Activated naive CD8-positive, alpha-beta T cell treated with anti-CD3 and anti-CD28 coated beads, Interleukin-2, amount 10 ng/mL, durations not matched to agents 7 days and 5 days (primary cell): ENCODE measurements at regions of chr6 and their contacts with region 1.

Region 1: GRCh38 chr6:157981395-157982296 is at the start of gene SYNJ2:
- DNase-seq: peak; percentile 91
- ATAC-seq: peak; percentile 91
- H3K4me3 Mint-ChIP-seq: peak within 1 kb of the TSS; percentile 91
- H3K27ac Mint-ChIP-seq: peak within 1 kb of the TSS; percentile 81
- H3K4me1 Mint-ChIP-seq: peaks cover 51% of the 10 kb centered on the region
- H3K27me3 Mint-ChIP-seq: peaks cover 3% of the 10 kb centered on the region
- total RNA-seq, gene SYNJ2: 26.2 to 32.1 TPM

Region 2: GRCh38 chr6:157962601-157963302 is 18.9 kb before region 1 on chr6:
- POLR2A ChIA-PET with region 1: interaction called, 17 read pairs
- DNase-seq: peak; percentile 58
- ATAC-seq: peak; percentile 70
- H3K4me3 Mint-ChIP-seq: peak overlapping the region; percentile 82
- H3K27ac Mint-ChIP-seq: peak overlapping the region; percentile 94
- H3K4me1 Mint-ChIP-seq: peaks cover 27% of the 10 kb centered on the region
- H3K27me3 Mint-ChIP-seq: no peaks in the 10 kb centered on the region

Region 3: DNA sequence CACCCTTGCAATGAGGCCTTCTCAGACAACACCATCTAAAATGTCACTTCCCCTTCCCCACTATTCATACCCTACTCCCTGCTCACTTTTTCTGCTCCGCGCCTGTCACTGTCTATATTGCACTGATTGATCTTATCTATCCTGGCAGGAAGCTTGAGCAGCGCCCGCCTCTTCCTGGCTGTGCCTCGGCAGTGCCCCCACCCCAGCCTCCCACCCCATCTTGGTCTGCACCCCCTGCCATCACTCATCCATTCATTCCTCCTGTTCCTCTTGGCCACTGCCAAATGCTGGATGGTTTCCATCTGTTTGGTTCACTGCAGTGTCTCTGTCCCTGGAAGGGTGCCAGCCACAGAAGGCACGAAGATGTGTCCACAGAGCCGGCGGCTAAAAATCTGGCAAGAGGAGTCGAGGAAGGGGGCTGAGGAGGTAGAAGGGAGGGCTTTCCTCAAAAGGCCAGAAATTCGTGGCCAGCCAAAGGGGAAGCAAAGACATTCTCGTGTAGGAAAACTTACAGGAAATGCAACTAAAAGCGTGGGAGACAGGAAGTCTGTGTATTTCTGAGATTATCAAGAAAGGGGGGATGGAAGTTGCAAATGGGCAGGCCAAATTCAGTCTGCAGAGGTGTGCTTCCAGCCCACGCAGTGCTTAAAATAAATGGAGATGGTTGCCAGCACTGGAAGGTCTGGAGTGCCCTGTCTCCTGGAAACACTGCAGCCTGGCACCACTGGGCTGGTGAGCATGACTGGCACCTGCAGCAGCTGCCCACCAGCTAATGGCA is 27.7 kb after region 1 on chr6:
- POLR2A ChIA-PET with region 1: no interaction called
- DNase-seq: no peak
- ATAC-seq: peak; percentile 51
- H3K4me3 Mint-ChIP-seq: peak overlapping the region; percentile 71
- H3K27ac Mint-ChIP-seq: peak overlapping the region; percentile 78
- H3K4me1 Mint-ChIP-seq: peaks cover 60% of the 10 kb centered on the region
- H3K27me3 Mint-ChIP-seq: no peaks in the 10 kb centered on the region

Region 4: GRCh38 chr6:158026054-158026900 is 44.6 kb after region 1 on chr6:
- POLR2A ChIA-PET with region 1: interaction called, 11 read pairs
- DNase-seq: peak; percentile 88
- ATAC-seq: peak; percentile 81
- H3K4me3 Mint-ChIP-seq: peak overlapping the region; percentile 88
- H3K27ac Mint-ChIP-seq: peak overlapping the region; percentile 99
- H3K4me1 Mint-ChIP-seq: peaks cover 40% of the 10 kb centered on the region
- H3K27me3 Mint-ChIP-seq: no peaks in the 10 kb centered on the region

Region 5: DNA sequence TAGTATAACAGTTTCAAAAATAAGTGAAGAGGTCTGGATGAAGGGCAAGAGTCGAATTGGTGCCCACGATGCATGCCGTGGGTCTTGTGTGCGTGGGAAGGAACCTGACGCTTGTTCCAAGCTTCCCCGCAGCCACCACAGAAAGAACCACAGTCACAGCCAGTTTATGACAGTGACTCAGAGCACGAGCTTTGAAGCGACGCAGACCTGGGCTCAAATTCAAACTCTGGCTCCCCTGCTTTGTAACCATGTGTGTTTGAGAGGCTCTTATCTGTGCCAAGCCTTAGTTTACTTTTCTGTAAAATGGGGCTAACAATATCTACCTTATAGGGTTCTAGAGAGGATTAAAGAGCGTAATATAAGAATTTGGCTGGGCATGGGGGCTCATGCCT is 65.5 kb after region 1 on chr6:
- POLR2A ChIA-PET with region 1: interaction called, 13 read pairs
- DNase-seq: peak; percentile 70
- ATAC-seq: peak; percentile 68
- H3K4me3 Mint-ChIP-seq: peak overlapping the region; percentile 62
- H3K27ac Mint-ChIP-seq: peak overlapping the region; percentile 91
- H3K4me1 Mint-ChIP-seq: peaks cover 25% of the 10 kb centered on the region
- H3K27me3 Mint-ChIP-seq: no peaks in the 10 kb centered on the region

Region 6: GRCh38 chr6:158072083-158072721 is 90.6 kb after region 1 on chr6:
- POLR2A ChIA-PET with region 1: interaction called, 10 read pairs
- DNase-seq: peak; percentile 81
- ATAC-seq: peak; percentile 67
- H3K4me3 Mint-ChIP-seq: no peak overlapping the region
- H3K27ac Mint-ChIP-seq: peak overlapping the region; percentile 71
- H3K4me1 Mint-ChIP-seq: peaks cover 22% of the 10 kb centered on the region
- H3K27me3 Mint-ChIP-seq: no peaks in the 10 kb centered on the region